Esophagus squamous epithelium (tissue), 5 donors: ENCODE measurements at regions of chr15 and their contacts with region 1.

Region 1: GRCh38 chr15:86082619-86083380 is 3.1 kb downstream of the AGBL1 start:
- DNase-seq: no peak
- H3K4me3 ChIP-seq: no peak overlapping the region
- H3K27ac ChIP-seq: no peak overlapping the region
- H3K4me1 ChIP-seq: no peaks in the 10 kb centered on the region
- H3K27me3 ChIP-seq: peaks cover 0 to 10% (median 0%) of the 10 kb centered on the region in 4 donors
- CTCF ChIP-seq: no peak
- POLR2A ChIP-seq: no peak

Region 2: GRCh38 chr15:86139828-86140227 is 57.0 kb after region 1 on chr15:
- intact Hi-C with region 1: loop called (anchors 10 kb)
- DNase-seq: no peak
- H3K4me3 ChIP-seq: no peak overlapping the region
- H3K27ac ChIP-seq: no peak overlapping the region
- H3K4me1 ChIP-seq: no peaks in the 10 kb centered on the region
- H3K27me3 ChIP-seq: no peaks in the 10 kb centered on the region
- CTCF ChIP-seq: no peak
- POLR2A ChIP-seq: no peak